GM13976 (cell line): ENCODE measurements at regions of chr18 and their contacts with region 1.

Region 1: DNA sequence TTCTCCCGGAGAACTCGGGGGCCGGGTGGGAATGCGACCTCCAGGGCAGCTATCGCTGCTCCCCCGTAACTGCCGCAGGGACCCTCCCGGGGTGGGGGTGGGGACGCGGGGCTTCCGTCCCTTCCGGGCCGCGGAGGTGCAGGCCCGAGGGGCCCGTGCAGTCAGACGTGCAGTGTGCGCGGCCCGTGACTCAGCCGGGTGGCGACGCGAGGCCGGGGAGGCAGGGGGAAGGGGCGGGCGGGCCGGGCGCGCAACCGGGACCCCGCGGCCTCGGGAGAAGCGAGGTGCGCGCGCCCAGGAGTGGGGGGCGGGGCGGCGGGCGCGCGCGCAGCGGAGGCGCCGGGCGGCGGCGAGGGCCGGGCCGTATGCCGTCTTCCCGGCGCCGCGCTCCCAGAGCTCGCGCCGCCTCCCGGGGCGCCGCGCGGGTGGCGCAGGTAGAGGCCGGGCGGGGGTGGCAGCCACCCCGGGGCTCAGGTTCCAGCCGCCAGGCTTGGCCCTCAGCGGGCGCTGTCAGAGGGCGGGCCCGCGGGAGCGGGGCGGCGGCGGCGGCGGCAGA is 25.0 kb upstream of the SMAD7 start:
- DNase-seq: peak; percentile 92
- CTCF ChIP-seq: no peak

Region 2: DNA sequence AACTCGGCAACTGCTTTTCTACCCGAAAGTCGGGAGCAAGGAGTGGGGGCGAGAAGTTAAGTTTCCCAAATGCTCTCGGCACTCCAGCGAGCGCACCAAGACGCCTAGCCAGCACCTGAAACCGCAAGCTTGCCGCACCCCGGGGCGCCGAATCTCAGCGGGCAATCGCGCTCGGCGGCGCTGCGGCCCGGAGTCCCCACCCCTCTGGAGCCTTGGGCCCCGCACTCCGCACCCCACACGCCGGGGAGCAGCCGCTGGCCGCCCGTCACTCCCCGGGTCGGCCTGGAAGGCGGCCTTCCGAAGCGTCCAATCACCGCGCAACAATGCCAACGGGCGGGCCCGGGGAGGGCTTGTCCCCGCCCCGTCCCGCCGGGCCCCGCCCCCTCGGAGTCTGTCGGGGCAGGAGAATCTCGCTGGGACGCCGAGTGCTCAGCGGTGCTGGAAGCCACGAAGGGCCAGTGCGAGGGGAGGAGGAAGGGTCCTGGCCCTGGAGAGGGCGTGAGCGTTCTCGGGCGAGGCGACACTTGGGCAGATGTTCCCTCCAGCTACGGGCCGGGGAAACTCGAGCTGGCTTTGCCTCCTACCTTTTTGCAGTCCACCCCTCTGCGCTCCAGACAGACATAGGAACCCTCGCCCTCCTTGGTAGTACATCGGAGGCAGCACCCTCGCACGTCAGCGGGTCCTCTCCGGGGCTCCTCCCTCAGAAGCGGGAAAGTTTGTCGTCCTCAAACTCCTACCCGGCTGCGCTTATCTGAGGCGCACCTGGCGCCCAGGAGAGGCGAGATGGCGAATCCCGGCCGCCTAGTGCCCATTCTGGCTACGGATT is 565.4 kb before region 1 on chr18:
- in situ Hi-C with region 1: no loop called
- DNase-seq: peak; percentile 92
- CTCF ChIP-seq: no peak

Region 3: DNA sequence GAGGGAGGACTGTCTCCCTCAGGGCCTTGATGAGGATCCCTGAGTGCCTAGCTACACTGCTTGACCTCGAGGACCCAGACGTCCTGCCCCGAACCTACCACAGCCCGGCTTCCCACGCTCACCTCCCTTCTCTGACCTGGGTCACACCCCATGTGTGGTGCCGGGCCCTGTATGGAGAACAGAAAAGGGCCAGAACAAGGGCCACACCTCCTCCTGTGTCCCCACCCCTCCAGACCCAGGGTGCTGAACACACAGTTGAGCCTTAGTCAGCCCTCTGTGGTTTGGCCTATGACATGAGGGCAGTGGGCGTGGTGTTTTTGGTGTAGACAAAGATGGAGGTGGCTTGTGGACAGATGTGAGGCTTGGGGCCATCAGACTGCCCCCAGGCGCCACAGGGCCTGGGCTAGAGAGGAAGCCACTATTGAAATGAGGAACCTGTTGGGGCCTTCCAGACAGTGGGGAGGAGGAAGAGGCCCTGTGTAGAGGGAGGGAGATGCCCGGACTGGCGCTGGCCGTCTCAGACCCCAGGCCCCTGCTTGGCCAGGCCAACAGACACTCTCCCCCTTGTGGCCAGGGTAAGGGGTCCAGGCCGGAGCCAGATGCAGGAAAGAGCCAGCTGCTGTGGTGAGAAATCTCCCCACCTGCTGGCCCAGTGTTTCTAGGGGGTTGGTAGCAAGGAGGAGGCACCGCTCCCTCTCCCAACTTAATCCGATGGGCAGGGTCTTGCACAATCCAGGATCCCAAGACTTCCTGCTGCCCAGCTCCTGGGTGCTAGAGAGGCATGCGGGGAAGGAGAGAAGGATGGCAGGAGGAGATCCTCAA is 78.8 kb before region 1 on chr18:
- in situ Hi-C with region 1: loop called (anchors 25 kb)
- DNase-seq: peak; percentile 75
- CTCF ChIP-seq: no peak